GM12878 (cell line): ENCODE measurements at regions of chr14 and their contacts with region 1.

Region 1: GRCh38 chr14:39432179-39432618 is at the start of gene FBXO33:
- DNase-seq: peak; percentile 87
- ATAC-seq: peak; percentile 87
- H3K4me3 ChIP-seq: peak within 1 kb of the TSS; percentile 91
- H3K27ac ChIP-seq: peak within 1 kb of the TSS; percentile 99
- H3K4me1 ChIP-seq: peaks cover 10% of the 10 kb centered on the region
- H3K27me3 ChIP-seq: no peaks in the 10 kb centered on the region
- CTCF ChIP-seq: no peak
- EP300 ChIP-seq: no peak
- POLR2A ChIP-seq: no peak; the same call in 1 of the 2 replicates
- RAD21 ChIP-seq: no peak
- polyA plus RNA-seq, gene FBXO33: 5.8 to 13.5 TPM

Region 2: DNA sequence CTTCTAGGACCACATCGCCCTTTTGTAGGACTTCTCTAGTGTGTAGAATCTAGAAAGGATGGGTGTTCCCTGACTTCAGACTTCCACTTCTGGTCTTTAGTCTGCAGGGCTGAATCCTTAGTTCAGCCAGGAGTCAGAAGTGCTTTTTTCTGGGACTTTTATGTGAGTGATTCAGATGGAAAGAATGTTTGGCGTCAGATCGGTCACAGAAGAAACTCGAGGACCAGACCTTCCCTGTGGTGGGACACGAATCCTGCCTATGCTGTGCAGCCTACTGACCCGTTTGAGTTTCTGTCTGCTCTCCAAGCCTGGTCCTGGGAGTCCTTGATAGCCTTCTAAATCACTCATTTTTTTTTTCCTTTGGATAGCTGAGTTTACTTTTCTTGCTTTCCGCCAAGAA is 1389.9 kb before region 1 on chr14:
- CTCF ChIA-PET with region 1: no interaction called
- POLR2A ChIA-PET with region 1: no interaction called
- RAD21 ChIA-PET with region 1: no interaction called
- SMC1A ChIA-PET with region 1: no interaction called
- in situ Hi-C with region 1: no loop called
- intact Hi-C with region 1: no loop called
- DNase-seq: no peak
- ATAC-seq: no peak
- H3K4me3 ChIP-seq: no peak overlapping the region
- H3K27ac ChIP-seq: no peak overlapping the region
- H3K4me1 ChIP-seq: no peaks in the 10 kb centered on the region
- H3K27me3 ChIP-seq: no peaks in the 10 kb centered on the region
- CTCF ChIP-seq: no peak
- EP300 ChIP-seq: no peak
- POLR2A ChIP-seq: no peak
- RAD21 ChIP-seq: no peak

Region 3: GRCh38 chr14:39169541-39169900 is 262.7 kb before region 1 on chr14:
- CTCF ChIA-PET with region 1: interaction called, 4 read pairs
- POLR2A ChIA-PET with region 1: interaction called, 4 read pairs
- RAD21 ChIA-PET with region 1: interaction called, 4 read pairs
- SMC1A ChIA-PET with region 1: interaction called, 9 read pairs
- in situ Hi-C with region 1: loop called (anchors 5 kb)
- intact Hi-C with region 1: loop called (anchors 2 kb)
- DNase-seq: no peak
- ATAC-seq: peak; percentile 22
- H3K4me3 ChIP-seq: peak overlapping the region; percentile 97
- H3K27ac ChIP-seq: peak overlapping the region; percentile 98
- H3K4me1 ChIP-seq: peaks cover 7% of the 10 kb centered on the region
- H3K27me3 ChIP-seq: no peaks in the 10 kb centered on the region
- CTCF ChIP-seq: no peak
- EP300 ChIP-seq: no peak
- POLR2A ChIP-seq: no peak
- RAD21 ChIP-seq: no peak

Region 4: GRCh38 chr14:39232554-39233415 is 199.4 kb before region 1 on chr14:
- CTCF ChIA-PET with region 1: interaction called, 93 read pairs
- POLR2A ChIA-PET with region 1: interaction called, 3 read pairs
- RAD21 ChIA-PET with region 1: interaction called, 15 read pairs
- SMC1A ChIA-PET with region 1: interaction called, 44 read pairs
- in situ Hi-C with region 1: no loop called
- intact Hi-C with region 1: no loop called
- DNase-seq: no peak
- ATAC-seq: peak; percentile 65
- H3K4me3 ChIP-seq: no peak overlapping the region
- H3K27ac ChIP-seq: no peak overlapping the region
- H3K4me1 ChIP-seq: no peaks in the 10 kb centered on the region
- H3K27me3 ChIP-seq: no peaks in the 10 kb centered on the region
- CTCF ChIP-seq: no peak; a peak in 1 of 6 replicates
- EP300 ChIP-seq: no peak
- POLR2A ChIP-seq: no peak
- RAD21 ChIP-seq: 0 out of 2 replicates have a peak, but pooled peaks have one; percentile 19

Region 5: GRCh38 chr14:39446131-39446744 is 14.0 kb after region 1 on chr14:
- CTCF ChIA-PET with region 1: interaction called, 36 read pairs
- POLR2A ChIA-PET with region 1: interaction called, 159 read pairs
- RAD21 ChIA-PET with region 1: interaction called, 159 read pairs
- SMC1A ChIA-PET with region 1: interaction called, 182 read pairs
- in situ Hi-C with region 1: no loop called
- intact Hi-C with region 1: no loop called
- DNase-seq: no peak
- ATAC-seq: peak; percentile 56
- H3K4me3 ChIP-seq: peak overlapping the region; percentile 41; the same call in 1 of the 2 replicates
- H3K27ac ChIP-seq: peak overlapping the region; percentile 79
- H3K4me1 ChIP-seq: peaks cover 48% of the 10 kb centered on the region
- H3K27me3 ChIP-seq: no peaks in the 10 kb centered on the region
- CTCF ChIP-seq: no peak
- EP300 ChIP-seq: peak in 1 of 2 experiments; percentile 45; a peak in 1 of 4 replicates
- POLR2A ChIP-seq: no peak
- RAD21 ChIP-seq: no peak

Region 6: GRCh38 chr14:39469094-39469710 is 37.0 kb after region 1 on chr14:
- CTCF ChIA-PET with region 1: interaction called, 100 read pairs
- POLR2A ChIA-PET with region 1: interaction called, 18 read pairs
- RAD21 ChIA-PET with region 1: interaction called, 101 read pairs
- SMC1A ChIA-PET with region 1: interaction called, 92 read pairs
- in situ Hi-C with region 1: no loop called
- intact Hi-C with region 1: loop called (anchors 2 kb)
- DNase-seq: no peak
- ATAC-seq: peak; percentile 97
- H3K4me3 ChIP-seq: no peak overlapping the region
- H3K27ac ChIP-seq: no peak overlapping the region
- H3K4me1 ChIP-seq: no peaks in the 10 kb centered on the region
- H3K27me3 ChIP-seq: no peaks in the 10 kb centered on the region
- CTCF ChIP-seq: peak; percentile 76 to 90 (median 78)
- EP300 ChIP-seq: no peak
- POLR2A ChIP-seq: no peak
- RAD21 ChIP-seq: peak; percentile 95